Activated naive CD4-positive, alpha-beta T cell treated with anti-CD3 and anti-CD28 coated beads for 36 hours (primary cell): ENCODE measurements at regions of chr12 and their contacts with region 1.

Region 1: GRCh38 chr12:51025836-51026638 is at the start of gene SLC11A2:
- DNase-seq: peak; percentile 96
- H3K4me3 Mint-ChIP-seq: peak within 1 kb of the TSS; percentile 85
- H3K27ac Mint-ChIP-seq: peak within 1 kb of the TSS; percentile 93
- H3K4me1 Mint-ChIP-seq: peaks cover 54% of the 10 kb centered on the region
- H3K27me3 Mint-ChIP-seq: no peaks in the 10 kb centered on the region
- total RNA-seq, gene SLC11A2: 18.6 to 27.0 TPM

Region 2: DNA sequence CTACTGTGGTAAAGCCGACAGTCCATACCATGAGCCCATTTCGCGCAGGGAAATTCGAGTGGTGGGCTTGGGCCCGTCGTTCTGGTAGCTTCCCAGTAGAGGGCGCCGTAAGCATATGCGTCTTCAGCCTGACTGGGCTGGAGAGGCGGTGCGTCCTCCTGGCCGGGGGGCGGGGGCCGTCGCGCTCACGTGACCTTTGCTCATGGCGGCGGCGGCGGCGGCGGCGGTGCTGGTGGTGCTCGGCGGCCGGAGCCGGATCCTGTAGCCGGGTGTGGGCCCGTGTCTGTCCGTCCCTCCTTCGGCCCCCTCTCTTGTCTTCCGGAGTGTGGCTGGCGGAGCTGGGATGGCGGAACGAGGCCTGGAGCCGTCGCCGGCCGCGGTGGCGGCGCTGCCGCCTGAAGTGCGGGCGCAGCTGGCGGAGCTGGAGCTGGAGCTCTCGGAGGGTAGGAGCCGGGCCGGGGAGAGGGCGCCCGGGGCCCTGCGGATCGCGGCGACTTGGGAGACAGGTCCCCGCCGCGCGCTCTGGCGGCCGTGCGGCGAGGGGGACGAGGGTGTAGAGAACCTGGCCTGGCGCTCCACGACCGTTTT is 521.1 kb before region 1 on chr12 and contains the start of gene DIP2B:
- CTCF ChIA-PET with region 1: interaction called, 4 read pairs
- intact Hi-C with region 1: loop called (anchors 1 kb)
- DNase-seq: peak; percentile 98
- H3K4me3 Mint-ChIP-seq: peak within 1 kb of the TSS; percentile 91
- H3K27ac Mint-ChIP-seq: peak within 1 kb of the TSS; percentile 90
- H3K4me1 Mint-ChIP-seq: peaks cover 42% of the 10 kb centered on the region
- H3K27me3 Mint-ChIP-seq: no peaks in the 10 kb centered on the region
- total RNA-seq, gene DIP2B: 27.8 to 28.2 TPM

Region 3: GRCh38 chr12:50620109-50620977 is 405.7 kb before region 1 on chr12:
- CTCF ChIA-PET with region 1: no interaction called
- intact Hi-C with region 1: loop called (anchors 10 kb)
- DNase-seq: peak; percentile 63
- H3K4me3 Mint-ChIP-seq: no peak overlapping the region
- H3K27ac Mint-ChIP-seq: peak overlapping the region; percentile 70
- H3K4me1 Mint-ChIP-seq: peaks cover 74% of the 10 kb centered on the region
- H3K27me3 Mint-ChIP-seq: no peaks in the 10 kb centered on the region

Region 4: DNA sequence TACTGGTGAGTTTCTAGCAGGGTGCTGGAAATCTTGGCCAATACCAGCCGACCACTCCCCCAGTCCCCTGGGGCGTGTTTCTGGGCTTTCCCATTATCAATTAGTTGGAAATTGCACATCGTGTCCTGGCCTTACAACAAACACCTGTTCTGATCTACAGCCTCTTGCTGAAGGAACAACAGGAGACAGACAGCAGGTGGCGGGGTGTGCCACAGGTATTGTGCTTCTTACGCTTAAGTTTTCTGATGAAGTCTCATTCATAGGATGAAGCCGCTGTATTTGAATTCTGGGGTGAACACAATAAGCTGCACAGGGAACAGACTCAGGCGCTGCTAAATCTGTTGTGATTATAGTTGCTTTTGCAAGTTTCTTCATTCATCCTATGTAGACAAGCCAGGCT is 73.0 kb before region 1 on chr12:
- CTCF ChIA-PET with region 1: interaction called, 6 read pairs
- intact Hi-C with region 1: loop called (anchors 1 kb)
- DNase-seq: peak; percentile 39
- H3K4me3 Mint-ChIP-seq: no peak overlapping the region
- H3K27ac Mint-ChIP-seq: no peak overlapping the region
- H3K4me1 Mint-ChIP-seq: no peaks in the 10 kb centered on the region
- H3K27me3 Mint-ChIP-seq: no peaks in the 10 kb centered on the region

Region 5: DNA sequence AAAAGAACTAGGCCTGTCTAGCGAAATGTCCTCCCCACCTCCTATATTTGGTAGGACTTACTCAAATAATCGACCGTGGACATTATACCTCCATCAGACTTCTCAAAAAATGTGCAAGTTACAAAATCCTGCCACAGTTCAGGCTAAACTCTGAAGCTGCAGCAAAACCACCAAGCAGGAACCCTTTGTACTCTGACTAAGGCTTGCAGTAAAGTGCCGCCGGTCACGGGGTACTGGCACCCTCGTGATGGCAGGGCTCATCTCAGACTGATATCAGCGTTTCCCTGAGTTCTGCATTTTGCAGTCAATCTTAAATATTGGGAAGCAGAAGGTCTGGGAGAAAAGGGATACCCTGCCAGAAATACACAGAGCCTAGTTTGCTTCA is 17.0 kb before region 1 on chr12:
- CTCF ChIA-PET with region 1: interaction called, 10 read pairs
- intact Hi-C with region 1: loop called (anchors 1 kb)
- DNase-seq: peak; percentile 83
- H3K4me3 Mint-ChIP-seq: peak overlapping the region; percentile 19
- H3K27ac Mint-ChIP-seq: peak overlapping the region; percentile 69
- H3K4me1 Mint-ChIP-seq: peaks cover 51% of the 10 kb centered on the region
- H3K27me3 Mint-ChIP-seq: no peaks in the 10 kb centered on the region

Region 6: DNA sequence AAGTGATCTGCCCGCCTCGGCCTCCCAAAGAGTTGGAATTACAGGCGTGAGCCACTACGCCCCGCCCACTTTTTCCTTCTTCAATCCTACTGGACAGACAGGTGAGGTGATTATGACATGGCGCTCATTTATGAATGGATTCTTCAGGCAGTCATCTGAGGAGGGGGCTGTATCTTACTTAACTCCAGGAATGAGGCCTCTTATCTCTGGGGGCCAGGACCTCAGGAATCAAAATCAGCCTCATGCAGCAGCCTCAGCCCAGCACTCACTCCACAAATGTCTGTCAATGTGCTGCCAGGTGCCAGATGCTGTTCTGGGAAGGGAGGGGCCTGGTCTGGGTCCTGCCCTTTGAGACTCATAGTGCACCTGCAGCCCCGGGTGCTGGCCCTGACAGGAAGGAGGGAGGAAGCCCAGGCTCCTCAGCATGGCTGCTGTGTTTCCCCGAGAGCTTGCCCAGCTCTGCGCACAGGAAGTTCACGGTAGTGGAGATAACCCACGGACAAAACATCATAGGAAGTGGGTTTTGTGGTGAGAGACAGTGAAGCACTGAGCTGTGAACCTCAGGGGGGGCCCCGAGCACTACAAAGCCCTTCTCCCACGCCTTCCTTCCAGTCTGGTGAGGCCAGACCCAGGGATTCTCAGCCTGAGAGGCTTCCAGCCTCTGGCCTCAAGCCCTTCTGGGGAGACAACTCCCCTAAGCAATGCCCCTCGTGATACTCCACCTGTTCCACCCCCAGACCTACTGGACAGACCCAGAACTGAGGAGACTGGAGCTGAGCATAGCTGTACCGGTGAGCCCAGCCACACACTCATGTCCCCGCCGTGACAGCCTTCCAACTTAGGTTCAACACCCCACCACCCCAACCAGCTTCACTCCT is 342.8 kb after region 1 on chr12:
- CTCF ChIA-PET with region 1: no interaction called
- intact Hi-C with region 1: loop called (anchors 1 kb)
- DNase-seq: peak; percentile 97
- H3K4me3 Mint-ChIP-seq: peak overlapping the region; percentile 37
- H3K27ac Mint-ChIP-seq: peak overlapping the region; percentile 86
- H3K4me1 Mint-ChIP-seq: peaks cover 41% of the 10 kb centered on the region
- H3K27me3 Mint-ChIP-seq: no peaks in the 10 kb centered on the region